Right ventricle myocardium superior (tissue), 1 donor: ENCODE measurements at regions of chr6 and their contacts with region 1.

Region 1: GRCh38 chr6:121055572-121056163 is 278.6 kb downstream of the TBC1D32 start:
- DNase-seq: no peak
- ATAC-seq: peak; percentile 80

Region 2: GRCh38 chr6:121000381-121000780 is 55.3 kb before region 1 on chr6:
- intact Hi-C with region 1: no loop called
- DNase-seq: no peak
- ATAC-seq: no peak

Region 3: DNA sequence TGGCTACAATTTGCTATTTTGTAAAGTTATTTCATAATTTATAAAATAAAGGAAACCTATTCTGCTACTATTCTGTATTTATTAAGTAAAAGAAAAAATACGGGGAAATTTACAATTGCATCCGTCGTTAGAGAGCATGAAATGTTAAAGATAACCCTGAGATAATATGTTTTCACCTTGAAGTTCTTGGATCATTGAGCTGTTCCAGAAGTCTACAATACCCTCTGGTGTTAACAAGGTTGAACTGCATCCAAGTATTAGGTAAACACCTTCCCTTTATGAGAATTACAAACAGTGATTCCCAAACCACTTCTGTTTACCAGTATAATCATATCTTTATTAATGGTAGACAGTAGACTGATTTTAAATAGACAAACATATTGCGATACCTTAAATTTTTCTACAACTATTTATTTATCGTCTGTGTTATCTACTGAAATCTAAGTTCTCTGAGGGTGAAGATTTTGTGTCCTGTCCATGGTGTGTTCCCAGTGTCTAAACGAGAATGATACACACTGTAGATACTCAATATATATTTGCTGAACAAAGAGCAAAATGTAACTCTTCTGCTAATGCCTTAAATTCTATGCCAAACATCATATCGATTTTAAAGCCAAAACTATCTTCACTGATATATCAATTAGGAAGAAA is 250.4 kb after region 1 on chr6:
- intact Hi-C with region 1: loop called (anchors 10 kb)
- DNase-seq: no peak
- ATAC-seq: no peak